WTC11 (cell line): ENCODE measurements at regions of chr11 and their contacts with region 1.

Region 1: GRCh38 chr11:66311965-66312548 is 4.8 kb downstream of the CD248 start:
- DNase-seq: peak; percentile 94
- ATAC-seq: peak; percentile 55
- H3K4me3 Mint-ChIP-seq: peak overlapping the region; percentile 87
- H3K27ac Mint-ChIP-seq: peak overlapping the region; percentile 99
- H3K4me1 Mint-ChIP-seq: peaks cover 13% of the 10 kb centered on the region
- H3K27me3 Mint-ChIP-seq: peaks cover 8% of the 10 kb centered on the region
- CTCF ChIP-seq: no peak; the same call in 1 of the 2 replicates

Region 2: GRCh38 chr11:66268283-66268951 is 43.6 kb before region 1 on chr11 and contains the start of gene RAB1B:
- CTCF ChIA-PET with region 1: interaction called, 22 read pairs
- POLR2A ChIA-PET with region 1: no interaction called
- DNase-seq: peak; percentile 100
- ATAC-seq: peak; percentile 83
- H3K4me3 Mint-ChIP-seq: peak within 1 kb of the TSS; percentile 97
- H3K27ac Mint-ChIP-seq: peak within 1 kb of the TSS; percentile 99
- H3K4me1 Mint-ChIP-seq: peaks cover 12% of the 10 kb centered on the region
- H3K27me3 Mint-ChIP-seq: no peaks in the 10 kb centered on the region; the same call in 1 of the 2 replicates
- CTCF ChIP-seq: no peak
- total RNA-seq, gene RAB1B: 125 to 134 TPM (median 130 TPM) in 3 replicates

Region 3: DNA sequence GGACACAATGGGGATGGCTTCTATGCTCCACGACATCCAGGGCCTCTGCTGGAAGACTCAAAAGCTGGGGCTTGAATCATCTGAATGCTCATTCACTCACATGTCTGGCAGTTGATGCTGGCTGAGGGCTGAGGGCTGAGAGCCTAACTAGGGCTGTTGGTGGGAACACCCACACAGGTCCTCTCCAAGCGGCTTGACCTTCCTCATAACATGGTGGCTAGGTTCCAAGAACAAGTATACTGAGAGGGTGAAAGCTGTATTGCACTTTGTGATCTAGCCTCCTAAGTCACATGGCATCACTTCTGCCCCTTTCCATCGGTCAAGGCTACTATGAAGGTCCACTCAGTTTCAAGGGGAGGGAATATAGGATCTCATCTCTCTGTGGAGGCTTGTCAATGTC is 12.9 kb before region 1 on chr11:
- CTCF ChIA-PET with region 1: interaction called, 79 read pairs
- POLR2A ChIA-PET with region 1: interaction called, 3 read pairs
- DNase-seq: no peak
- ATAC-seq: no peak
- H3K4me3 Mint-ChIP-seq: no peak overlapping the region
- H3K27ac Mint-ChIP-seq: no peak overlapping the region
- H3K4me1 Mint-ChIP-seq: peaks cover 5% of the 10 kb centered on the region
- H3K27me3 Mint-ChIP-seq: peaks cover 2% of the 10 kb centered on the region; the same call in 1 of the 2 replicates
- CTCF ChIP-seq: no peak

Region 4: GRCh38 chr11:66344550-66345315 is 32.7 kb after region 1 on chr11 and contains the start of gene BRMS1:
- CTCF ChIA-PET with region 1: interaction called, 35 read pairs
- POLR2A ChIA-PET with region 1: interaction called, 6 read pairs
- DNase-seq: peak; percentile 98
- ATAC-seq: peak; percentile 53
- H3K4me3 Mint-ChIP-seq: peak within 1 kb of the TSS; percentile 96
- H3K27ac Mint-ChIP-seq: peak within 1 kb of the TSS; percentile 95
- H3K4me1 Mint-ChIP-seq: peaks cover 26% of the 10 kb centered on the region
- H3K27me3 Mint-ChIP-seq: peaks cover 4% of the 10 kb centered on the region; the same call in 1 of the 2 replicates
- CTCF ChIP-seq: no peak
- total RNA-seq, gene BRMS1: 37.0 to 44.5 TPM (median 40.8 TPM) in 3 replicates

Region 5: GRCh38 chr11:66386171-66387069 is 74.4 kb after region 1 on chr11:
- CTCF ChIA-PET with region 1: interaction called, 51 read pairs
- POLR2A ChIA-PET with region 1: interaction called, 8 read pairs
- DNase-seq: peak; percentile 95
- ATAC-seq: peak; percentile 74
- H3K4me3 Mint-ChIP-seq: peak overlapping the region; percentile 64
- H3K27ac Mint-ChIP-seq: no peak overlapping the region
- H3K4me1 Mint-ChIP-seq: peaks cover 6% of the 10 kb centered on the region; the same call in 1 of the 2 replicates
- H3K27me3 Mint-ChIP-seq: peaks cover 13% of the 10 kb centered on the region
- CTCF ChIP-seq: peak; percentile 79

Region 6: GRCh38 chr11:66498506-66498905 is 186.4 kb after region 1 on chr11:
- CTCF ChIA-PET with region 1: no interaction called
- POLR2A ChIA-PET with region 1: no interaction called
- DNase-seq: no peak
- ATAC-seq: no peak
- H3K4me3 Mint-ChIP-seq: no peak overlapping the region
- H3K27ac Mint-ChIP-seq: no peak overlapping the region
- H3K4me1 Mint-ChIP-seq: no peaks in the 10 kb centered on the region
- H3K27me3 Mint-ChIP-seq: no peaks in the 10 kb centered on the region
- CTCF ChIP-seq: no peak